ENCODE measurements at regions of chr2 and their contacts with region 1.

Region 1: DNA sequence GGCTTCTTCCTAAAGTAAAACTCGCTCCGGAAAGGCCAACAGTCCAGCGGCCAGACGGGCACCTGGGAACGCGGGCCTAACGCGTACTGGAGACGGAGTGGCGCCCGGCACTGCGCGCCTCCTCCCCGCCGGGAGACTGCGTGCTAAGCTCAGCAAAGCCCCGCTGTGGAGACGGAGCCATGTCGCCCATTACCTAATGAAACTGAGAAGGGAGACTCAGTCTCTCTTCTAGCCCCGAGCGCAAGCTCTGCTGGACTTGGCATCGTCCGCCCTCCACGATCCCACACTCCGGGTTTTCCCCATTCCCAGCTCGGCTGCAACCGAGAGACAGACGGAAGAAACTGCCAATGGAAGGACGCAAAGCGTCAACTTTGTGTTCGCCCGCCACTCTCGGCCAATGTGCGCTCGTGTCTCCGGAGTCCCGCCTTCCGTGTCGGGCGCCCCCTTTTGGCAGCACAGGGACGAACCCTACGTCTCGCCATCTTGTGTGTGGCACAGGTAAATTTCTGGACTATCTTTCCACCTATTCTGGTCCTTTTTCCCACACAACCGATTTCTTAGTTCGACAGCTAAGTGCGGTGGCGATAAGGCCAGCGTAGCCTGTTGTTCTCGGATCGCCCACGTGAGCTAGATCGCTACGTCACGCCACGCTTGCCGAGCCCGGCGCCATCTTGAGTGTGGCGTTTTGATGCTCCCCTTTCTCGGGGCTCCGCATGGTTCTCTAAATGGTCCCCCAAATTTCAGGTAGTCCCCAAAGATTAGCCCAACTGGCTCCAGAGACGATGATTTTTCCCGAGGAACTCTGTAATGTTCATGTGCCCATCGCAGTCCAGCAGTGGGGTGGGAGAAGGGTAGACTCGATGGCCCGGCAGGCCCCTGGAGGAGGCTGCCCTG is 1.3 kb upstream of the PTMA start:
- DNase-seq: peak; percentile 99
- ATAC-seq: peak; percentile 43
- H3K4me3 ChIP-seq: peak overlapping the region; percentile 84
- H3K27ac ChIP-seq: peak overlapping the region; percentile 92
- H3K4me1 ChIP-seq: peaks cover 20% of the 10 kb centered on the region
- H3K27me3 ChIP-seq: no peaks in the 10 kb centered on the region
- CTCF ChIP-seq: peak; percentile 95

Region 2: DNA sequence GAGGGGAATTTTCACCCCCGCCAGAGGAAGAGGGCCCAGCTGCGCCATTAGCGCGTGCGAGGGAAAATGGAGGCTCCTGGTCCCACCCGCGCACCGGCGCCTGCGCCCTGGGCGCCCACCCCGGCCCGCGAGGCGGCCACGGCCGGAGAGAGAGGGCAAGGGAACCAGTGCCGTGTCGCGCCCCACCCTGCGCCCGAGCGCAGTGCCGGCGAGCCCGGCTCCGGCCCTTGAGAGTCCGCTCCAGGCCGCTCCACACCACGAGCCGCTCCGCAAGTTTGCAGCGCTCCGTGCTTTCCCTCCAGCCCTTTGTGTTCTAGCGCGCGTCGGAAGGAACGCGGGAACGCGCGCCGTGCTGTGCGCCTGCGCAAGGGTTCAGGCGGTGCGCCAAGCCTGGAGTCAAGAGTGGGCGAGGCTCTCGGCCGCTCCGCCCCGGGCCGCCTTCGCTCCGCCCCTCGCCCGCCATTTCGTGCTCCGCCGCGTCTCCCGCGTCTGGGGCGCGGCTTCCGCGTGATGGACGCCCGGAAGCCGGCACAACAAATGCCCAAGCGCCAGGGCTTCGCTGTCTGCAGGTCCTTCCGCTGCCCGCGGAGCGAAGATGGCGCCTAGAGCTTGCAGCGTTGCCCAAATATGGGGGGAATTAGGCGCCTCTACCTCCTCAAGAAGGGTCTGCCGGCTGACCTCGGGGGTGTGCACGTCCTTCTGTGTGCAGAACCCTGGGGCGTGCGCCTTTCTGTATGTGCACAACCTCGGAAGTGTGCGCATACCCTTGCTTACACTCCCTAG is 44.8 kb before region 1 on chr2:
- CTCF ChIA-PET with region 1: no interaction called
- POLR2A ChIA-PET with region 1: no interaction called
- intact Hi-C with region 1: loop called (anchors 1 kb)
- DNase-seq: peak; percentile 97
- ATAC-seq: peak; percentile 59
- H3K4me3 ChIP-seq: peak overlapping the region; percentile 52
- H3K27ac ChIP-seq: peak overlapping the region; percentile 46
- H3K4me1 ChIP-seq: peaks cover 24% of the 10 kb centered on the region
- H3K27me3 ChIP-seq: no peaks in the 10 kb centered on the region
- CTCF ChIP-seq: no peak